MCF 10A (cell line): ENCODE measurements at regions of chr2 and their contacts with region 1.

Region 1: DNA sequence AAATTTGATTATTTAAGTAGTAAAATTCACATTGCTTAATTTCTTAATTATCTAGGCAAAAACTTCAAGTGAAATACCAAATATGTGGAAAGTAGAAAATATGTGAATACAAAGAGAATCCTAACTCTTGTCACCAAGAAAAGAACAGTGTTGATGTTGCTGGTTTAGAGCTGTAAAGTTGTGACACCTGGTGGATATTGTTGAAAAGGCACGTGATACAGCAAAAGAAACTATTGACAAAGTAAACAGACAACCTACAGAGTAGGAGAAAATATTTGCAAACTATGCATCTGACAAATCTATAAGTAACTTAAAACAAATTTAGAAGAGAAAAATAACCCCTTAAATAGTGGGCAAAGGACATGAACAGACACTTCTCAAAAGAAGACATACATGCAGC is 25.6 kb upstream of the ZC3H15 start:
- DNase-seq: peak; percentile 35
- H3K4me3 Mint-ChIP-seq: no peak overlapping the region
- H3K27ac Mint-ChIP-seq: no peak overlapping the region
- H3K4me1 Mint-ChIP-seq: no peaks in the 10 kb centered on the region
- H3K27me3 Mint-ChIP-seq: no peaks in the 10 kb centered on the region
- CTCF ChIP-seq: peak; percentile 39

Region 2: GRCh38 chr2:185208261-185208660 is 1252.2 kb before region 1 on chr2:
- CTCF ChIA-PET with region 1: interaction called, 5 read pairs
- POLR2A ChIA-PET with region 1: no interaction called
- intact Hi-C with region 1: loop called (anchors 5 kb)
- DNase-seq: peak; percentile 73
- H3K4me3 Mint-ChIP-seq: no peak overlapping the region
- H3K27ac Mint-ChIP-seq: no peak overlapping the region
- H3K4me1 Mint-ChIP-seq: no peaks in the 10 kb centered on the region
- H3K27me3 Mint-ChIP-seq: no peaks in the 10 kb centered on the region
- CTCF ChIP-seq: peak; percentile 50

Region 3: GRCh38 chr2:185608799-185609198 is 851.7 kb before region 1 on chr2:
- CTCF ChIA-PET with region 1: interaction called, 6 read pairs
- POLR2A ChIA-PET with region 1: no interaction called
- intact Hi-C with region 1: loop called (anchors 1 kb)
- DNase-seq: peak; percentile 45
- H3K4me3 Mint-ChIP-seq: no peak overlapping the region
- H3K27ac Mint-ChIP-seq: no peak overlapping the region
- H3K4me1 Mint-ChIP-seq: peaks cover 7% of the 10 kb centered on the region
- H3K27me3 Mint-ChIP-seq: no peaks in the 10 kb centered on the region
- CTCF ChIP-seq: peak; percentile 42

Region 4: DNA sequence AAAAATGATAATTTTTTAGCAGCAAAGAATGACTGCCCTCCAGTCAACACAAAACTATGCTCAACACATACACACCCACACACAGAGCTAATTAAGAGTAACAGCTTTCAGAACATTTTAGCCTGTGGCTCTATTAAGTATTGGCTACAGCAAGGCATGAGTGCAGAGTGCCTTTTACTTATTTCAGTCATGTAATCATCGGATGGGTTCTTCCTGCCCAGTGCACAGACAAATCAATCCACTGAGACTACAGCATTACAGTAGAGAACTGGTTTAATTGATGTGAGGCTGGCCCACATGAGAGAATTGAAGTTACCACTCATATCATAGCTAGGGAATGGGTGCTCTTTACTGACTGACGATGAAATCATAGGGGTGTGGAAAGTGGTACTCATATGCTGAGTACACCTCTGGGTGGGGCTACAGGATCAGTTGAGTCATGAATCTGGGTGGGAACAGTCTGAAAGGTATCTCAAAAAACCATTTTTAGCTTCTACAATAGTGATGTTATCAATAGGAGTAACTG is 480.9 kb before region 1 on chr2:
- CTCF ChIA-PET with region 1: interaction called, 3 read pairs
- POLR2A ChIA-PET with region 1: interaction called, 3 read pairs
- intact Hi-C with region 1: loop called (anchors 1 kb)
- DNase-seq: peak; percentile 66
- H3K4me3 Mint-ChIP-seq: no peak overlapping the region
- H3K27ac Mint-ChIP-seq: peak overlapping the region; percentile 43
- H3K4me1 Mint-ChIP-seq: peaks cover 17% of the 10 kb centered on the region
- H3K27me3 Mint-ChIP-seq: no peaks in the 10 kb centered on the region
- CTCF ChIP-seq: no peak

Region 5: GRCh38 chr2:186269536-186269935 is 190.9 kb before region 1 on chr2:
- CTCF ChIA-PET with region 1: no interaction called
- POLR2A ChIA-PET with region 1: no interaction called
- intact Hi-C with region 1: no loop called
- DNase-seq: no peak
- H3K4me3 Mint-ChIP-seq: no peak overlapping the region
- H3K27ac Mint-ChIP-seq: no peak overlapping the region
- H3K4me1 Mint-ChIP-seq: no peaks in the 10 kb centered on the region
- H3K27me3 Mint-ChIP-seq: no peaks in the 10 kb centered on the region
- CTCF ChIP-seq: no peak

Region 6: DNA sequence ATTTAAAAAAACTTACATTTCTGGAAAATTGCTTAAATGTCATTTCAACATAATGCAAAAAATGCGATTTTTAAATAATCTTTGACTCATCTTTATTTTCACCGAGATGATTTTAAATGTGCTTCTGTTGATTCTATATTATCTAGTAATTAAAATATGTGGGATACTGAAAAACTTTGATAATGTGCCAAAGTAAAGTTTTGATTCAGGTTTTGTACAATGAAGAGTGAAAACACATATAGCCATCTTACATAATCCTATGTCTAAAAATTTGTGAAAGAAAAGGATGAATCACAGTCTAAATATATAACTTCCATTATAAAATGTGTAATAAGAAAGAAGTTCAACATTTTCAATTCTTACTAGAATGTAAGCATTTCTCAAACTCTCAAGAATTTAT is 178.7 kb before region 1 on chr2:
- CTCF ChIA-PET with region 1: no interaction called
- POLR2A ChIA-PET with region 1: no interaction called
- intact Hi-C with region 1: no loop called
- DNase-seq: peak; percentile 53
- H3K4me3 Mint-ChIP-seq: no peak overlapping the region
- H3K27ac Mint-ChIP-seq: no peak overlapping the region
- H3K4me1 Mint-ChIP-seq: no peaks in the 10 kb centered on the region
- H3K27me3 Mint-ChIP-seq: no peaks in the 10 kb centered on the region
- CTCF ChIP-seq: no peak

Region 7: GRCh38 chr2:186515376-186515775 is 54.9 kb after region 1 on chr2:
- CTCF ChIA-PET with region 1: no interaction called
- POLR2A ChIA-PET with region 1: no interaction called
- intact Hi-C with region 1: no loop called
- DNase-seq: peak; percentile 16
- H3K4me3 Mint-ChIP-seq: no peak overlapping the region
- H3K27ac Mint-ChIP-seq: no peak overlapping the region
- H3K4me1 Mint-ChIP-seq: no peaks in the 10 kb centered on the region
- H3K27me3 Mint-ChIP-seq: no peaks in the 10 kb centered on the region
- CTCF ChIP-seq: no peak

Region 8: GRCh38 chr2:187372213-187372612 is 911.7 kb after region 1 on chr2:
- CTCF ChIA-PET with region 1: no interaction called
- POLR2A ChIA-PET with region 1: no interaction called
- intact Hi-C with region 1: no loop called
- DNase-seq: no peak
- H3K4me3 Mint-ChIP-seq: peak overlapping the region; percentile 5
- H3K27ac Mint-ChIP-seq: no peak overlapping the region
- H3K4me1 Mint-ChIP-seq: peaks cover 12% of the 10 kb centered on the region
- H3K27me3 Mint-ChIP-seq: no peaks in the 10 kb centered on the region
- CTCF ChIP-seq: no peak